ENCODE measurements at regions of chr3 and their contacts with region 1.

Region 1: DNA sequence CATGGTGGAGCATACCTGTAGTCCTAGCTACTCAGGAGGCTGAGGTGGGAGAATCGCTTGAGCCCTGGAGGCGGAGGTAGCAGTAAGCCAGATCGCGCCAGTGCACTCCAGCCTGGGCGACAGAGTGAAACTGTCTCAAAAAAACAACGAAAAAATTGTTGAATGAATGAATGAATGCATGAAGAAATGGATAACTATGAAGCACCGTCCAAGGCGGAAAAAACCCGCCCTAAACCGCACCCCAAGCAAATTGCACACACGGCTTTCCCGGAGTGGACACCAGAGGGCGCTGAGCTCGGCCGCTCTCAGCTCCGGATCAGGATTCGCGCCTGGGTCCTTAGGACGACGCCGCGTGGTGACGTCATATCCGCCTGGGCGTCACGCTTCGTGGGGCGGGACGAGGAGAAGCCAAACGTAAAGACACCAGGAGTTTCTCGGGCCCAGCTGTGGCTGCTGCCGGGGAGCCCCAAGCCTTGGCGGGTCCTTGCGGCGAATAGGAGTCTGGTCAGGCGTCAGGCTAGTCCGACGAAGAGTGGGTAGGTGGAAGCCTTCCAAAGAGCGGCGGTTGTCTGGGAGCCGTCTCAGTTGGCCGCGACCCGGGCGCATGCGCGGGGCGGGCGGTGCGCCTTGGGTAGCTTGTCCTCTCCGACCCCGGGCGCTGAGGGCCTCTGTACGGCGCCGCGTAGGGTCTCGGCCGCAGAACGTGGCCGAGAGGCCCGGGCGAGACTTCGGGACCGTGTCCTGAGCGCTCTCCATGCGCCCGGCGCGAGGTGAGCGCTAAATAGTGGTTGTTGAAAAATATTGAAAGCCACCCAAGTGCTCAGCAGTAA is at the starts of genes HTD2 and RPP14:
- DNase-seq: peak; percentile 90
- ATAC-seq: peak; percentile 94
- H3K4me3 ChIP-seq: peak within 1 kb of the TSS; percentile 74
- H3K27ac ChIP-seq: peak within 1 kb of the TSS; percentile 94
- H3K4me1 ChIP-seq: 0 out of 2 replicates have a peak, but pooled peaks cover 2% of the 10 kb centered on the region
- H3K27me3 ChIP-seq: no peaks in the 10 kb centered on the region
- CTCF ChIP-seq: peak; percentile 93 to 98 (median 96); a peak in 5 of 6 replicates
- EP300 ChIP-seq: peak in 1 of 2 experiments; percentile 43; a peak in 1 of 4 replicates
- POLR2A ChIP-seq: peak; percentile 84
- RAD21 ChIP-seq: peak; percentile 45; the same call in 1 of the 2 replicates
- polyA plus RNA-seq, gene HTD2: 13.5 to 15.9 TPM
- polyA plus RNA-seq, gene RPP14: 9.1 to 16.3 TPM

Region 2: DNA sequence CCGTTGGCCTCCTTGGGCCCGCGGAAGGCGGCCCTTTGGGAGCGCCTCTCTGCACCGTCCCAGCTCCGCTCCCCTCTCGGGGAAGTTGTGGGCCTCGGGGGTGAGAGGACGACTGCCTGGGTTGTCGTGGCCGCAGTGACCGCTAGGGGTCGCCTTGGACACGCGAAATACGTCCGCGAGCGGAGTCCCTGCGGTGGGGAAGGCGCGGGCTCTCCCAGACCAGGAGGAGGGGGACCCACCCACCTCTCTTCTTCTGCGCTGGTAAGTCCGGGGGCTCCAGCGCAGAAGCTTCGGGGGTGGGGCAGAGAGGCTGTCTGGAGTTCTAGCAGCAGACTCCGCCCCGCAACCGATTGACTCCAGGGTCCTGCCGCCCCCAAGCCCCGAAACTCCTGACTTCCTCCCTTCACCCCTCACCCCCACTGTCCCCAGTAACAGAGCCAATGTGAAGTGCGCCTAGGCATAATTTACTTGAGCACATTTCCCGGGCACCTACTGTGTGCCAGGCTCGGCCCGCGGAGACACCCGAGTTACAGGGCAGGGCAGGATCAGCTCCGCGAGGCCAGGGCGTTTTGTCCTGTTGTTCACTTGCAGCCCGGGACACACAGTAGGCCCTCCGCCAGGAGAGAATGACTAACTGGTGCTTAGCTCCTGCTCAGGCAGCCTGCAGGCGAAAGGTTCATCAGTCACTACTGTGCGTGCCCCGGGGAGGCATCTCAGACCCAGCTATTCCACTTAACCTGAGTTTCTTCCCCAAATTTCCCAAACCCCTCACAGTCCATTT is 128.2 kb before region 1 on chr3:
- CTCF ChIA-PET with region 1: interaction called, 503 read pairs
- POLR2A ChIA-PET with region 1: interaction called, 7 read pairs
- RAD21 ChIA-PET with region 1: interaction called, 24 read pairs
- SMC1A ChIA-PET with region 1: interaction called, 30 read pairs
- in situ Hi-C with region 1: no loop called
- intact Hi-C with region 1: no loop called
- DNase-seq: no peak
- ATAC-seq: peak; percentile 94
- H3K4me3 ChIP-seq: peak overlapping the region; percentile 33; the same call in 1 of the 2 replicates
- H3K27ac ChIP-seq: no peak overlapping the region
- H3K4me1 ChIP-seq: peaks cover 14% of the 10 kb centered on the region
- H3K27me3 ChIP-seq: no peaks in the 10 kb centered on the region
- CTCF ChIP-seq: peak; percentile 81 to 93 (median 88)
- EP300 ChIP-seq: no peak
- POLR2A ChIP-seq: no peak
- RAD21 ChIP-seq: peak; percentile 68

Region 3: GRCh38 chr3:58237238-58237940 is 68.7 kb before region 1 on chr3 and contains the start of gene ABHD6:
- CTCF ChIA-PET with region 1: interaction called, 37 read pairs
- POLR2A ChIA-PET with region 1: interaction called, 6 read pairs
- RAD21 ChIA-PET with region 1: interaction called, 20 read pairs
- SMC1A ChIA-PET with region 1: interaction called, 22 read pairs
- in situ Hi-C with region 1: no loop called
- intact Hi-C with region 1: no loop called
- DNase-seq: no peak
- ATAC-seq: peak; percentile 79
- H3K4me3 ChIP-seq: peak within 1 kb of the TSS; percentile 68
- H3K27ac ChIP-seq: peak within 1 kb of the TSS; percentile 44
- H3K4me1 ChIP-seq: peaks cover 13% of the 10 kb centered on the region
- H3K27me3 ChIP-seq: no peaks in the 10 kb centered on the region
- CTCF ChIP-seq: peak; percentile 33 to 58 (median 37); a peak in 5 of 6 replicates
- EP300 ChIP-seq: no peak
- POLR2A ChIP-seq: peak; percentile 48
- RAD21 ChIP-seq: peak; percentile 61
- polyA plus RNA-seq, gene ABHD6: 1.4 to 1.5 TPM

Region 4: DNA sequence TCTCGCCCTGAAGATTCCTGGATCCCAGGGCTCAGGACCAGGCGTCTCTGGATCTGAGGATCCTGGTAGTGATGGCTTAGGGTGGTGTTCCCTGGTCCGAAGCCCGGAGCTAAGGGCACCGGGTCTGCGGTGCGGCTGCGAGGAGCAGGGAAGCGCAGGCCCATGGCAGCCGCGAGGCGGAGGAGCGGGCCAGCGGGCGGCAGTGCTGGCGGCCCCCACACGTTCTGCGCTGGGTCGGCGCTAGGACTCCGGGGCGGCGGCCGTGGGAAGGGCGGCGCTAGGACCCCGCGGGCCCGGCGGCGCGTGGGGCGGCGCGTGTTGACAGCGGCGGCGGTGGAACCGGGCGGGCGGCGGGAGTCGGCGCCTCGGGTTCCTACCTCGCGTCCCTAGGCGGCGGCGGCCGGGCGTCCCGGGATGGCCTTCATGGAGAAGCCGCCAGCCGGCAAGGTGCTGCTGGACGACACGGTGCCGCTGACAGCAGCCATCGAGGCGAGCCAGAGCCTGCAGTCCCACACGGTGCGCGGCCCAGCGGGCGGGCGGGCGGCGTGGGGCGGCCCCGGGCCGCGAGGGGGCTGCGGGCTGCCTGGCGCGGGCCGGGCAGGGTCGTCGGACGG is 26.6 kb after region 1 on chr3 and contains the start of gene PXK:
- CTCF ChIA-PET with region 1: interaction called, 22 read pairs
- POLR2A ChIA-PET with region 1: interaction called, 4 read pairs
- RAD21 ChIA-PET with region 1: interaction called, 19 read pairs
- SMC1A ChIA-PET with region 1: interaction called, 23 read pairs
- in situ Hi-C with region 1: no loop called
- intact Hi-C with region 1: no loop called
- DNase-seq: no peak
- ATAC-seq: peak; percentile 92
- H3K4me3 ChIP-seq: peak within 1 kb of the TSS; percentile 93
- H3K27ac ChIP-seq: no peak within 1 kb of the TSS; the same call in 1 of the 2 replicates
- H3K4me1 ChIP-seq: peaks cover 7% of the 10 kb centered on the region; the same call in 1 of the 2 replicates
- H3K27me3 ChIP-seq: no peaks in the 10 kb centered on the region
- CTCF ChIP-seq: peak in 2 of 3 experiments; percentile 14 to 31; a peak in 1 of 6 replicates
- EP300 ChIP-seq: no peak
- POLR2A ChIP-seq: peak; percentile 68
- RAD21 ChIP-seq: peak; percentile 40; the same call in 1 of the 2 replicates
- polyA plus RNA-seq, gene PXK: 8.4 to 10.5 TPM

Region 5: DNA sequence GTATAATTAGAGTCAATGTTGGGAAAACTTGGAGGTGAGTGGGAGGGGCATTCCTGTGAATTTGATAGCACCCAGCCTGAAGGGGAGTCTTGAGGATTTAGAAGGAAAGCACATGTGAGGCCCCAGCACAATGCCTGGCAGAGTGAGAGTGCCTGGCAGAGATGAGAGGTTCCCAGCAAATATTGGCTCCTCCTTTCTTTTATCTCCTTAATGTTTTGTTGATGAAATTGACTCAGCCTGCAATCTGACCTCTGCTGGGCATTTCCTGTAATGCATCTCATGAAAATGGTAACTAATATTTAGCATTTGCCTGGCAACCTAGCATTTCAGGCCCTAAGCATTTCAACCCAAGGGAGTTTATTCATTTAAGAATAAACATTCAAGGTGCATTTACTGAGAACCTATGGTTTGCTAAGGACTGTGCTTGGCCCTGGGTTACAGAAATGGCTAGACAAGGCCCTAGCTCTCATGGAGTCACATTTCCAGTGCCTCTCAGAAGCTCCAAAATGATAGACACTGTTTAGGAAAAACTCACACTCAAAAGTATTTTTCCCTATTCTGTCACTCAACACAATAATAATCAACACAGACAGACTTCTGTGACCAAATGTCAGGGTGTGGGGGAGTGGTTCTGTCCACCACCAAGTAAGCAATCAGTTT is 108.6 kb after region 1 on chr3:
- CTCF ChIA-PET with region 1: interaction called, 47 read pairs
- POLR2A ChIA-PET with region 1: no interaction called
- RAD21 ChIA-PET with region 1: interaction called, 16 read pairs
- SMC1A ChIA-PET with region 1: interaction called, 20 read pairs
- in situ Hi-C with region 1: no loop called
- intact Hi-C with region 1: loop called (anchors 5 kb)
- DNase-seq: no peak
- ATAC-seq: peak; percentile 74
- H3K4me3 ChIP-seq: no peak overlapping the region
- H3K27ac ChIP-seq: no peak overlapping the region
- H3K4me1 ChIP-seq: peaks cover 9% of the 10 kb centered on the region
- H3K27me3 ChIP-seq: no peaks in the 10 kb centered on the region
- CTCF ChIP-seq: peak; percentile 63 to 72 (median 71)
- EP300 ChIP-seq: no peak
- POLR2A ChIP-seq: no peak
- RAD21 ChIP-seq: peak; percentile 80

Region 6: GRCh38 chr3:58526515-58526957 is 220.4 kb after region 1 on chr3:
- CTCF ChIA-PET with region 1: interaction called, 34 read pairs
- POLR2A ChIA-PET with region 1: interaction called, 3 read pairs
- RAD21 ChIA-PET with region 1: interaction called, 4 read pairs
- SMC1A ChIA-PET with region 1: interaction called, 5 read pairs
- in situ Hi-C with region 1: no loop called
- intact Hi-C with region 1: no loop called
- DNase-seq: no peak
- ATAC-seq: no peak
- H3K4me3 ChIP-seq: no peak overlapping the region
- H3K27ac ChIP-seq: no peak overlapping the region
- H3K4me1 ChIP-seq: no peaks in the 10 kb centered on the region
- H3K27me3 ChIP-seq: no peaks in the 10 kb centered on the region
- CTCF ChIP-seq: no peak
- EP300 ChIP-seq: no peak
- POLR2A ChIP-seq: no peak
- RAD21 ChIP-seq: no peak

Measured in GM12878 (cell line).